Activated T-helper 1 cell treated with anti-CD3 and anti-CD28 coated beads, Interleukin-12 subunit alpha, Interleukin-12 subunit beta, Interleukin-2, Interleukin-4 antibody, amounts not matched to agents 30 ng/mL and 10 ng/mL and 1 ng/mL, durations not matched to agents 14 hours and 24 hours and 36 hours (primary cell): ENCODE measurements at regions of chr12 and their contacts with region 1.

Region 1: DNA sequence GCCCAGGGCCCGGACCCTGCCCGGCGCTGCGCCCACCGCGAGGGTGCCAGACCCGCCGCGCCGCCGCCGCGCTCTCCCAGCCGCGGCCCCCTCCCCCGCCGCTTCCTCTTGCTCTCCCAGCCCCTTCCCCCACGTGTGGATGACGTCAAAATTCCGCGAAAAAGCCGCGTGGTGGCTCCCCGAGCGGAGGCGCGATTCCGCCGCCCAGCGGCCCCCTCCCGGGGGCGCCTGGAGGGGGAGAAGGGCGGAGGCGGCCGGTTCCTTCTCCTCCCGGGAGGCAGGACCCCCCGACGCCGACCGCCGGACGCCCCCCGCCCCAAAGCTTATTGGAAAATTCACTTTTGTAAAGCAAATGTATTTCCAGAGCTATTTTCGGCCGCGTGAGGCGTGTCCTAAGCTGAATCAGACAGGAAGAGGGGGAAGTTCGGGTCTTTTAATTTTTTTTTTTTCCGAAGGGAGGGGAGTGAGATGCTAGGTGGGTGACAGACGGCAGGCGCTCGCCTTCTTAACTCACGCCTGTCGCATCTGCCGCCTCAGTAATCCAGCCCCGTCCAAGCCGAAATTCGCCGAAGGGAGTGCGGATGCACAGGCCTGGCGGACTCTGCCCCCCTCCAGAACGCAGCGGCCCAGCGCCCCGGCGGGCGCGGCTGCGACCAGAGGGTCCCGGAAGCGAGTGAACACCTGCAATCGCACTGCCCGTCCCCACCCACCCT is 4.1 kb upstream of the CCND2 start:
- DNase-seq: peak; percentile 91
- H3K4me3 Mint-ChIP-seq: peak overlapping the region; percentile 90
- H3K27ac Mint-ChIP-seq: peak overlapping the region; percentile 94
- H3K4me1 Mint-ChIP-seq: peaks cover 26% of the 10 kb centered on the region
- H3K27me3 Mint-ChIP-seq: peaks cover 9% of the 10 kb centered on the region

Region 2: GRCh38 chr12:4118017-4118510 is 151.4 kb before region 1 on chr12:
- intact Hi-C with region 1: loop called (anchors 1 kb)
- DNase-seq: no peak
- H3K4me3 Mint-ChIP-seq: peak overlapping the region; percentile 67
- H3K27ac Mint-ChIP-seq: peak overlapping the region; percentile 81
- H3K4me1 Mint-ChIP-seq: peaks cover 80% of the 10 kb centered on the region
- H3K27me3 Mint-ChIP-seq: no peaks in the 10 kb centered on the region

Region 3: GRCh38 chr12:4251216-4251891 is 18.1 kb before region 1 on chr12:
- intact Hi-C with region 1: loop called (anchors 2 kb)
- DNase-seq: no peak
- H3K4me3 Mint-ChIP-seq: no peak overlapping the region
- H3K27ac Mint-ChIP-seq: peak overlapping the region; percentile 35
- H3K4me1 Mint-ChIP-seq: peaks cover 22% of the 10 kb centered on the region
- H3K27me3 Mint-ChIP-seq: peaks cover 13% of the 10 kb centered on the region